ENCODE measurements at regions of chr18 and their contacts with region 1.

Region 1: GRCh38 chr18:50786864-50787263 is 33.0 kb downstream of the MRO start:
- DNase-seq: no peak
- H3K4me3 ChIP-seq: no peak overlapping the region
- H3K27ac ChIP-seq: no peak overlapping the region
- H3K4me1 ChIP-seq: no peaks in the 10 kb centered on the region
- H3K27me3 ChIP-seq: no peaks in the 10 kb centered on the region
- CTCF ChIP-seq: no peak
- POLR2A ChIP-seq: no peak

Region 2: DNA sequence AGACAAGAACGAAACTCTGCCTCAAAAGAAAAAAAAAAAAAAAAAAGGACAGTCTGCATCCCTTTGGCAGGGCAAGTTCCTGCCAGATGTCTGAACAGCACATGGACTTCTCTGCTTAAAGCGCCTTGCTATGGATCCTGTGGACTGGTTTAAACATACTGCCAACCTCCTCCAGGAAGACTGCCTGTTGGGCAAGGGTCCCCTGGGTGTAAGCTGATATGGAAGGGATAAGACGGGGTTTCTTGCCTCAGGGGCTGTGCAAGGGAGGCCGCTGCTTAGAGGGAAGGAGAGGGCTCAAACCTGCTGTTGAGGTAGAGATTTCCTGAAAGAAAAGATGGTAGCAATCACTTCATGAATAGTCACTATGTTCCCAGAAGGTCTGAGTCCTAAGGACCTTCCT is 389.8 kb before region 1 on chr18:
- intact Hi-C with region 1: no loop called
- DNase-seq: no peak
- H3K4me3 ChIP-seq: no peak overlapping the region
- H3K27ac ChIP-seq: no peak overlapping the region
- H3K4me1 ChIP-seq: no peaks in the 10 kb centered on the region
- H3K27me3 ChIP-seq: no peaks in the 10 kb centered on the region
- CTCF ChIP-seq: no peak
- POLR2A ChIP-seq: no peak

Region 3: DNA sequence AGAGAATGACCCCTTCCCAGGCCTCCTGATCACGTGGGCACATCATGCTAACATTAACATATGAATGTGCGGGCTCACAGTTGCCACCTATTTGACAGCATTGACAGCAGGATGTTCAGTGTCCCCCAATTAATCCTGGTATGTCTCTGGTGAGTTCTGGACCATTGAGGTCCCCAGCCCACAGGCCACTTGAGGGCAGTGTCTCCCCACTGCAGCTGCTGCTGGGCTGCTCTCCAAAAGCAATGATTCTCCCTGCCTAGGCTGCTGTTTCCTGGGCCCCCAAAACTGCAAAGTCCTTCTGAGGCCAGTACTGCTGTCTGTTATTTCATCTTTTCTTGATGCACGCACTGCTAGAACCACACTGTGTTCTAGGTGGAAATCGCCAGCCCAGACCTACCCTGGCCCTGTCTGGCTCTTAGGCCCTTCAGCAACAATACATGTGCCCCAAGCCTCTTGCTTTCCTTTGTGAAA is 279.7 kb before region 1 on chr18:
- intact Hi-C with region 1: loop called (anchors 5 kb)
- DNase-seq: peak; percentile 72 to 74
- H3K4me3 ChIP-seq: no peak overlapping the region
- H3K27ac ChIP-seq: no peak overlapping the region
- H3K4me1 ChIP-seq: peaks cover 6 to 9% of the 10 kb centered on the region in 2 donors
- H3K27me3 ChIP-seq: no peaks in the 10 kb centered on the region
- CTCF ChIP-seq: peak in 5 of 6 experiments; percentile 56 to 91 (median 84)
- POLR2A ChIP-seq: no peak

Region 4: GRCh38 chr18:50830544-50830943 is 43.7 kb after region 1 on chr18:
- intact Hi-C with region 1: no loop called
- DNase-seq: no peak
- H3K4me3 ChIP-seq: no peak overlapping the region
- H3K27ac ChIP-seq: no peak overlapping the region
- H3K4me1 ChIP-seq: peaks cover 7 to 10% of the 10 kb centered on the region in 2 donors
- H3K27me3 ChIP-seq: no peaks in the 10 kb centered on the region
- CTCF ChIP-seq: no peak
- POLR2A ChIP-seq: no peak